Endothelial cell of umbilical vein (primary cell): ENCODE measurements at regions of chr4 and their contacts with region 1.

Region 1: DNA sequence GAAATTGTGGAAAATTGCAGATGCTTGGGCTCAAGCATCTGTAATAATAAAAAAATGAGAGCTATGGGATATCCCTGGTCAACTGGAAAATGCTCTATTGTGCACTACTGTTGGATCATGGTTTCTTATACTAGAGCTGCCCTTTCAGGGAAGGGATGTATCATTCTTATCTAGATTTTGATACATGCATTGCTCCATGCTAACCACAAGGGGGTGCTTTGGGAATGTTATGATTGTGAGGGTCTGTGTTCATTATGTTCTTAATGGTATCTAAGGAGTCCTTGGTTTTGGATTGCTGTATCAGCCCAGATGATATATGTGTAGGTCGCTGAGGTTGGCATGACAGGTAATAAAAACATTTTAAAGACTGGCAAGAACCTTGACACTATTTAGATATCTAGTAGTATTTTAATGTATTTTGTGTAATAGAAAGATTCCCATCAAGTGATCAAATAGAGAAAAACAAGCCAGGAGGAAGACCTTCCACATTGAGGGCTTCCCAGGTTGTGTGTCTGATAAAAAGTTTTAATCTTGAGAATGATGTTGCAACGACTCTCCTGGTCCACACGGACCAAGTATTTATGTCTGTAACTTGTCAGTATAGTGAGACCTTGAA is 49.2 kb upstream of the TLR2 start:
- DNase-seq: peak; percentile 14
- H3K4me3 ChIP-seq: no peak overlapping the region
- H3K27ac ChIP-seq: no peak overlapping the region
- H3K4me1 ChIP-seq: no peaks in the 10 kb centered on the region
- H3K27me3 ChIP-seq: no peaks in the 10 kb centered on the region
- CTCF ChIP-seq: peak; percentile 45 to 53
- POLR2A ChIP-seq: no peak

Region 2: GRCh38 chr4:153432968-153433753 is 201.7 kb before region 1 on chr4:
- CTCF ChIA-PET with region 1: no interaction called
- POLR2A ChIA-PET with region 1: no interaction called
- dilution Hi-C with region 1: no loop called
- intact Hi-C with region 1: loop called (anchors 5 kb)
- DNase-seq: peak; percentile 45
- H3K4me3 ChIP-seq: no peak overlapping the region
- H3K27ac ChIP-seq: no peak overlapping the region
- H3K4me1 ChIP-seq: no peaks in the 10 kb centered on the region
- H3K27me3 ChIP-seq: no peaks in the 10 kb centered on the region
- CTCF ChIP-seq: peak; percentile 45 to 46
- POLR2A ChIP-seq: no peak

Region 3: GRCh38 chr4:153649572-153649991 is 14.7 kb after region 1 on chr4:
- CTCF ChIA-PET with region 1: interaction called, 14 read pairs
- POLR2A ChIA-PET with region 1: no interaction called
- dilution Hi-C with region 1: no loop called
- intact Hi-C with region 1: no loop called
- DNase-seq: peak; percentile 21
- H3K4me3 ChIP-seq: no peak overlapping the region
- H3K27ac ChIP-seq: no peak overlapping the region
- H3K4me1 ChIP-seq: peaks cover 5% of the 10 kb centered on the region
- H3K27me3 ChIP-seq: peaks cover 0 to 2% of the 10 kb centered on the region in 2 experiments
- CTCF ChIP-seq: peak in 1 of 2 donors; percentile 10
- POLR2A ChIP-seq: no peak